Activated naive CD4-positive, alpha-beta T cell treated with anti-CD3 and anti-CD28 coated beads for 36 hours (primary cell): ENCODE measurements at regions of chr18 and their contacts with region 1.

Region 1: DNA sequence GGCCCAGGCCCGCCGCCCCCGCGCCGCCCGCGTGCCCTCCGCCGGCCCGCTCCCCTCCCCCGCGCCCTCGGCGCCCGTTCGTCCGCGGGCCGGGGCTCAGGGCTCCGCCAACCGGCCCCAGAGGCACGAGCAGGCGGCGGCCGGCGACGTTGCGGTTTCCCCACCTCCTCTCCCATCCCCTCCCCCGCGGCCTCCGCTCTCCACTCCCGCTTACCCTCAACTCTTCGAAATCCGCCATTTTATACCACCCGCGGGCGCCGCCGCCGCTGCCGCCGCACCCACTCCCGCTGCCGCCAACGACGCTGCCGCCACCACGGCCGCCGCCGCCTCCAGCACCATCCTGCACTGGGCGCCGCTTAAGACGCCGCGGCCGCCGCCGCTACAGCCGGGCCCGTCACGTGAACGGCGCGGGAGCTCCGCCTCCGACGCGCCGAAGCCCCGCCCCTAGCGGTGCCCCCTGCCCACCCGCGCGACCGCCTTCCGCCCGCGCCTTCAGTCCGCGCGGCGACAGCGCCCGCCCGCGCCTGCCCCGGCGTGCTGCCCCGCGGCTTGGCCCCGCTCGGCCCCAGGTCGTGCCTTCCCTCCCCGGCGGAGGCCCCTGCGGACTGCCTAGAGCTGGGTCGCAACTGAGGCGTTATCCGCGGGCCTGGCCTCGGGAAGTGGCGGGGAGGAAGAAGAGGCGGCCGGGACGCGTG is at the starts of genes KATNAL2 and PIAS2:
- DNase-seq: peak; percentile 71
- H3K4me3 Mint-ChIP-seq: peak within 1 kb of the TSS; percentile 86
- H3K27ac Mint-ChIP-seq: peak within 1 kb of the TSS; percentile 86
- H3K4me1 Mint-ChIP-seq: peaks cover 48% of the 10 kb centered on the region
- H3K27me3 Mint-ChIP-seq: no peaks in the 10 kb centered on the region
- total RNA-seq, gene KATNAL2: 0.45 to 0.52 TPM
- total RNA-seq, gene PIAS2: 21.9 to 23.4 TPM

Region 2: GRCh38 chr18:46622999-46623398 is 294.3 kb before region 1 on chr18:
- CTCF ChIA-PET with region 1: no interaction called
- intact Hi-C with region 1: loop called (anchors 5 kb)
- DNase-seq: no peak
- H3K4me3 Mint-ChIP-seq: no peak overlapping the region
- H3K27ac Mint-ChIP-seq: peak overlapping the region; percentile 71
- H3K4me1 Mint-ChIP-seq: peaks cover 27% of the 10 kb centered on the region
- H3K27me3 Mint-ChIP-seq: no peaks in the 10 kb centered on the region

Region 3: GRCh38 chr18:46756559-46757201 is 160.6 kb before region 1 on chr18 and contains the start of gene ST8SIA5:
- CTCF ChIA-PET with region 1: no interaction called
- intact Hi-C with region 1: loop called (anchors 10 kb)
- DNase-seq: no peak
- H3K4me3 Mint-ChIP-seq: peak within 1 kb of the TSS; percentile 53
- H3K27ac Mint-ChIP-seq: no peak within 1 kb of the TSS
- H3K4me1 Mint-ChIP-seq: peaks cover 16% of the 10 kb centered on the region
- H3K27me3 Mint-ChIP-seq: peaks cover 59% of the 10 kb centered on the region
- total RNA-seq, gene ST8SIA5: not detected

Region 4: GRCh38 chr18:46899274-46899948 is 17.8 kb before region 1 on chr18:
- CTCF ChIA-PET with region 1: no interaction called
- intact Hi-C with region 1: no loop called
- DNase-seq: no peak
- H3K4me3 Mint-ChIP-seq: no peak overlapping the region
- H3K27ac Mint-ChIP-seq: no peak overlapping the region
- H3K4me1 Mint-ChIP-seq: peaks cover 15% of the 10 kb centered on the region
- H3K27me3 Mint-ChIP-seq: no peaks in the 10 kb centered on the region

Region 5: GRCh38 chr18:46946656-46947282 is 29.5 kb after region 1 on chr18:
- CTCF ChIA-PET with region 1: no interaction called
- intact Hi-C with region 1: loop called (anchors 2 kb)
- DNase-seq: peak; percentile 68
- H3K4me3 Mint-ChIP-seq: no peak overlapping the region
- H3K27ac Mint-ChIP-seq: no peak overlapping the region
- H3K4me1 Mint-ChIP-seq: no peaks in the 10 kb centered on the region
- H3K27me3 Mint-ChIP-seq: peaks cover 10% of the 10 kb centered on the region